ENCODE measurements at regions of chr7 and their contacts with region 1.

Region 1: DNA sequence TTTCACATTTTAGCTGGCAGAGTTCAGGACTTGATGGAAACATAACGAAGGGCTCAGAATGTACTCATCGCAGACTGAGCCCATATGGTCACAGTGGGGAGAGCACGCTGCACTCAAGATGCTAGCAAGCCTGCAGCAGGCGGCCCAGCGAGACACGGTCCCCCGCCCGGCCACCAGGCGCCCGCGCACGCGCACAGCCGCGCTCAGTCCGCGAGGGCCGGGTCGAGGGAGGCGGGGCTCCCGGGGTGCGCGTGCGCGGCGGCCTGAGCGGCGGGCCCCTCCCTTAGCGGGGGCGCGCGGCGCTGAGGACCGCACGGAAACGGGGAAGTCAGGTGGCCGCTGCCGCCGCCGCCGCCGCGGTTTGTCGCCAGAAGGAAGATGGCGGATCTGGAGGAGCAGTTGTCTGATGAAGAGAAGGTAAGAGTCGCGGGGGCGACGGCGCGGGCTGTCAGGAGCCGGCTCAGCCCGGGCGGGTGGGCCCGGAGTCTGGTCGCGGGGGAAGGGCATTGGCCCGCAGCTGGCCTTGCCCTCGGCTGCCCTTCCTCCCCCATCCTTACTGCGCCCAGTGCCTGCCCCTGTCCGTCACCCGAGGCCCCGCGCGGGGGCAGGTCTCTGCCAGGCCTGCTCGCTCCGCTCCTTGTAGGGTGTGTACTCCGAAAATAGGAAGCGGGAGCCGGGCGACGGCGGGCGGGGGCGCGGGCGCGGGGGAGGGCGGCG is at the start of gene CAPZA2:
- DNase-seq: peak; percentile 95
- H3K4me3 Mint-ChIP-seq: peak within 1 kb of the TSS; percentile 88
- H3K27ac Mint-ChIP-seq: peak within 1 kb of the TSS; percentile 90
- H3K4me1 Mint-ChIP-seq: peaks cover 39% of the 10 kb centered on the region
- H3K27me3 Mint-ChIP-seq: peaks cover 6% of the 10 kb centered on the region
- total RNA-seq, gene CAPZA2: 163 to 176 TPM

Region 2: GRCh38 chr7:116211006-116211912 is 651.1 kb before region 1 on chr7:
- CTCF ChIA-PET with region 1: no interaction called
- POLR2A ChIA-PET with region 1: no interaction called
- intact Hi-C with region 1: loop called (anchors 1 kb)
- DNase-seq: peak; percentile 86
- H3K4me3 Mint-ChIP-seq: peak overlapping the region; percentile 96
- H3K27ac Mint-ChIP-seq: peak overlapping the region; percentile 99
- H3K4me1 Mint-ChIP-seq: peaks cover 55% of the 10 kb centered on the region
- H3K27me3 Mint-ChIP-seq: no peaks in the 10 kb centered on the region

Region 3: GRCh38 chr7:116802746-116803152 is 59.6 kb before region 1 on chr7:
- CTCF ChIA-PET with region 1: no interaction called
- POLR2A ChIA-PET with region 1: no interaction called
- intact Hi-C with region 1: loop called (anchors 2 kb)
- DNase-seq: peak; percentile 56
- H3K4me3 Mint-ChIP-seq: no peak overlapping the region
- H3K27ac Mint-ChIP-seq: no peak overlapping the region
- H3K4me1 Mint-ChIP-seq: peaks cover 16% of the 10 kb centered on the region
- H3K27me3 Mint-ChIP-seq: peaks cover 19% of the 10 kb centered on the region

Region 4: GRCh38 chr7:116843378-116843777 is 19.0 kb before region 1 on chr7:
- CTCF ChIA-PET with region 1: no interaction called
- POLR2A ChIA-PET with region 1: no interaction called
- intact Hi-C with region 1: no loop called
- DNase-seq: no peak
- H3K4me3 Mint-ChIP-seq: no peak overlapping the region
- H3K27ac Mint-ChIP-seq: no peak overlapping the region
- H3K4me1 Mint-ChIP-seq: no peaks in the 10 kb centered on the region
- H3K27me3 Mint-ChIP-seq: peaks cover 19% of the 10 kb centered on the region

Region 5: GRCh38 chr7:116953727-116954442 is 91.5 kb after region 1 on chr7:
- CTCF ChIA-PET with region 1: no interaction called
- POLR2A ChIA-PET with region 1: no interaction called
- intact Hi-C with region 1: loop called (anchors 1 kb)
- DNase-seq: peak; percentile 31
- H3K4me3 Mint-ChIP-seq: peak overlapping the region; percentile 92
- H3K27ac Mint-ChIP-seq: peak overlapping the region; percentile 87
- H3K4me1 Mint-ChIP-seq: peaks cover 24% of the 10 kb centered on the region
- H3K27me3 Mint-ChIP-seq: no peaks in the 10 kb centered on the region

Region 6: GRCh38 chr7:118183786-118184564 is 1321.6 kb after region 1 on chr7 and contains the start of gene LSM8:
- CTCF ChIA-PET with region 1: no interaction called
- POLR2A ChIA-PET with region 1: no interaction called
- intact Hi-C with region 1: loop called (anchors 10 kb)
- DNase-seq: peak; percentile 98
- H3K4me3 Mint-ChIP-seq: peak within 1 kb of the TSS; percentile 98
- H3K27ac Mint-ChIP-seq: peak within 1 kb of the TSS; percentile 99
- H3K4me1 Mint-ChIP-seq: peaks cover 36% of the 10 kb centered on the region
- H3K27me3 Mint-ChIP-seq: peaks cover 2% of the 10 kb centered on the region
- total RNA-seq, gene LSM8: 39.1 TPM